Heart left ventricle (tissue), 16 donors: ENCODE measurements at regions of chr15 and their contacts with region 1.

Region 1: DNA sequence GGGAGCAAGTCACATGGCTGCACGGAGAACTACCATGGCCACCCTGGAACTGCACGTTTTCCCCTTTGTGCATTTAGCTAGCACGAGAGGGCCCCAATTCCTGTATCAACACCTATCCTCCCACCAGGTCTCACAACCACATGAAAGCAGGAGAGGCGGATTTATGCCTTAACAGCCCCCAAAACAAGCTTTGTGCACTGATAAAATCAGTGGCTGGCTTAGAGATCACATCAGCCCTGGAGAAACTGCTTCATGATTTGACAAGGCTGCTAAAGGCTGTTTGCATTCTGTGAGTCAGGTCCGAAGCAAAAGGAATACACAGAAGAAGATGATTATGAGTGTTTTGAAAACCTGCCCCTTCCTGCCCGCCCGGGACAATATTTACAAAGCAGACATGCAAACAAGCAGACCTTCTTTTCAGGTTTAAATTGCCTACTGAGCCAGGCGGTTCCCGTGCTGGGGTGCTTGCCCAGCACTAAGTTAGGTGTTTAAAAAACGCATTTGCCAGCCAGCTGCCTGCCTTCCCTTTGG is 25.9 kb downstream of the CEMIP start:
- DNase-seq: no peak
- ATAC-seq: no peak
- H3K4me3 ChIP-seq: no peak overlapping the region
- H3K27ac ChIP-seq: no peak overlapping the region
- H3K4me1 ChIP-seq: peaks cover 0 to 4% (median 0%) of the 10 kb centered on the region in 12 donors
- H3K27me3 ChIP-seq: no peaks in the 10 kb centered on the region
- CTCF ChIP-seq: no peak
- POLR2A ChIP-seq: no peak

Region 2: GRCh38 chr15:80669663-80670273 is 135.3 kb before region 1 on chr15:
- intact Hi-C with region 1: no loop called
- DNase-seq: no peak
- ATAC-seq: no peak
- H3K4me3 ChIP-seq: no peak overlapping the region
- H3K27ac ChIP-seq: no peak overlapping the region
- H3K4me1 ChIP-seq: peaks cover 0 to 2% (median 0%) of the 10 kb centered on the region in 12 donors
- H3K27me3 ChIP-seq: peaks cover 0 to 6% (median 0%) of the 10 kb centered on the region in 9 donors
- CTCF ChIP-seq: no peak
- POLR2A ChIP-seq: no peak

Region 3: GRCh38 chr15:80743187-80743833 is 61.7 kb before region 1 on chr15:
- intact Hi-C with region 1: loop called in 1 of 10 experiments (anchors 10 kb)
- DNase-seq: no peak
- ATAC-seq: no peak
- H3K4me3 ChIP-seq: no peak overlapping the region
- H3K27ac ChIP-seq: no peak overlapping the region
- H3K4me1 ChIP-seq: peaks cover 0 to 4% (median 0%) of the 10 kb centered on the region in 12 donors
- H3K27me3 ChIP-seq: no peaks in the 10 kb centered on the region
- CTCF ChIP-seq: no peak
- POLR2A ChIP-seq: no peak

Region 4: DNA sequence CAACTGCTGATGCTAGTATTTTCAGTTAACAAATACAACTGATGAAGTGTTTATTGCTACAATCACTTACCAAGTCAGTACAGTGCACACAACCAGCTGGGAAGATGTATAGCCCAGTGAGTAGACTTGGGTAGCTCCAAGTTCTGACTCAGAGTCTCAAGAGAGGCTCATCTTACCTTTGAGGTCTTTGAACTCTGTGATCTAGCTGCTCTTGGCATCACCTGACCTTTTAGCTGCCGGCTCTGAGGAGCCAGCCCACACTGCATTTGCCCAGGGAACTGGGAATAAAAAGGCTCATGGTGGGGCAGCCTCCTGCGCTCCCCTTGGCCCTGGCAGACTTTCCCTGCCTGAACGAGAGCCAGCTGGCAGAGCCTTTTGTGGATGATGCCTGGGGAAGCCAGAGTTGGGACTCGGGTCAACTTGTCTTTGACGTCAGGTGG is 56.7 kb after region 1 on chr15:
- intact Hi-C with region 1: loop called in 1 of 10 experiments (anchors 10 kb)
- DNase-seq: peak in 1 of 5 donors; percentile 32
- ATAC-seq: peak in 3 of 4 donors; percentile 34 to 46 (median 38)
- H3K4me3 ChIP-seq: no peak overlapping the region
- H3K27ac ChIP-seq: peak overlapping the region in 1 of 12 donors; percentile 11
- H3K4me1 ChIP-seq: peaks cover 0 to 19% (median 9%) of the 10 kb centered on the region in 12 donors
- H3K27me3 ChIP-seq: no peaks in the 10 kb centered on the region
- CTCF ChIP-seq: no peak
- POLR2A ChIP-seq: no peak

Region 5: GRCh38 chr15:81108427-81108826 is 303.4 kb after region 1 on chr15:
- intact Hi-C with region 1: no loop called
- DNase-seq: no peak
- ATAC-seq: no peak
- H3K4me3 ChIP-seq: no peak overlapping the region
- H3K27ac ChIP-seq: no peak overlapping the region
- H3K4me1 ChIP-seq: peaks cover 0 to 26% (median 5%) of the 10 kb centered on the region in 12 donors
- H3K27me3 ChIP-seq: no peaks in the 10 kb centered on the region
- CTCF ChIP-seq: peak; percentile 35 to 59 (median 48)
- POLR2A ChIP-seq: no peak